Vagina (tissue), 2 donors: ENCODE measurements at regions of chr7 and their contacts with region 1.

Region 1: GRCh38 chr7:35906191-35906908 is 105.5 kb downstream of the SEPTIN7 start:
- DNase-seq: no peak
- H3K4me3 ChIP-seq: no peak overlapping the region
- H3K27ac ChIP-seq: no peak overlapping the region
- H3K4me1 ChIP-seq: no peaks in the 10 kb centered on the region
- H3K27me3 ChIP-seq: no peaks in the 10 kb centered on the region
- CTCF ChIP-seq: peak; percentile 76 to 96 (median 84)
- POLR2A ChIP-seq: no peak

Region 2: GRCh38 chr7:35716038-35716803 is 190.1 kb before region 1 on chr7:
- intact Hi-C with region 1: loop called (anchors 5 kb)
- DNase-seq: no peak
- H3K4me3 ChIP-seq: peak overlapping the region; percentile 17 to 19
- H3K27ac ChIP-seq: no peak overlapping the region
- H3K4me1 ChIP-seq: peaks cover 16% of the 10 kb centered on the region
- H3K27me3 ChIP-seq: no peaks in the 10 kb centered on the region
- CTCF ChIP-seq: no peak
- POLR2A ChIP-seq: no peak

Region 3: GRCh38 chr7:35975851-35976454 is 69.6 kb after region 1 on chr7:
- intact Hi-C with region 1: loop called (anchors 10 kb)
- DNase-seq: no peak
- H3K4me3 ChIP-seq: no peak overlapping the region
- H3K27ac ChIP-seq: no peak overlapping the region
- H3K4me1 ChIP-seq: no peaks in the 10 kb centered on the region
- H3K27me3 ChIP-seq: no peaks in the 10 kb centered on the region
- CTCF ChIP-seq: peak; percentile 60 to 76 (median 73)
- POLR2A ChIP-seq: no peak